Caco-2 (cell line): ENCODE measurements at regions of chr7 and their contacts with region 1.

Region 1: DNA sequence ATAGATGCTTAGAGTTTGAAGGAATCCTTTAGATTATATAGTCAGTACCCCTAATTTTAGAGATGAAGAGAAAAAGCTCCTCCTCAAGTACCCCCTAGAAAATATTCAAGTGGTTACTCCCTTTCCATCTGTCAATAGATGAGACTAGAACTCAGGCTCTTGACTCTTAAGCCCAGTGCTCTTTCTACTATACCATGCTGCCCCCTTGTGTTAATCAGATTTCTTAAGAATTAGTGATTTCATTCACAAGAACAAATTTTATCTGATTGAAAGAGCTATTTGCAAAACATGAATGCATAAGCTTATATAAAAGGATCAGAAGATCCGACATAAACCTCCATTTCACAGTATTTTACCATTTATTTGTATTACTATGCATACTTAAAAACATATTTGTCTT is 179.3 kb downstream of the TFEC start:
- DNase-seq: peak in 1 of 2 experiments; percentile 39
- H3K4me3 ChIP-seq: no peak overlapping the region
- H3K4me3 Mint-ChIP-seq: no peak overlapping the region
- H3K27ac Mint-ChIP-seq: no peak overlapping the region
- H3K4me1 ChIP-seq: no peaks in the 10 kb centered on the region
- H3K4me1 Mint-ChIP-seq: no peaks in the 10 kb centered on the region
- H3K27me3 ChIP-seq: no peaks in the 10 kb centered on the region
- H3K27me3 Mint-ChIP-seq: no peaks in the 10 kb centered on the region
- CTCF ChIP-seq: peak in 1 of 2 experiments; percentile 27

Region 2: DNA sequence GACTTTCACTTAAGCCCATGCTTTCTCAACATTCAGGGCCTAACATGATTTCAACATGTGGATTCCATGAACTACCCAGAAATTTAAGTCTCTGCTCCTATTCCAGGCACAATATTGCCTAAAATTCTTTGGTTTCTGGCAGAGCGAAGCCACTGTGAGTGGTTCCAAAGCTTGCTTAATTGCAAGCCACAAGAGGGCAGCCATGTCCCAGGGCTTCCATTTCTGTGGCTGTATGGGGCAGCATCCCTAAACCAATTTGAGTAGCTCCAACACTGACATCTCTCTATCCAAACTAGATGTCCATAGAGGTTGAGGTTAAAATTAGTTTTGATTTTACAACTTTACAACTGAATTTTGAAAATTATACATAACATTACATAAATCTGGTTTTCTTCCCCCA is 985.7 kb before region 1 on chr7:
- CTCF ChIA-PET with region 1: no interaction called
- POLR2A ChIA-PET with region 1: no interaction called
- intact Hi-C with region 1: loop called (anchors 1 kb)
- DNase-seq: peak; percentile 51 to 59
- H3K4me3 ChIP-seq: no peak overlapping the region
- H3K4me3 Mint-ChIP-seq: no peak overlapping the region
- H3K27ac Mint-ChIP-seq: no peak overlapping the region
- H3K4me1 ChIP-seq: no peaks in the 10 kb centered on the region
- H3K4me1 Mint-ChIP-seq: no peaks in the 10 kb centered on the region
- H3K27me3 ChIP-seq: no peaks in the 10 kb centered on the region
- H3K27me3 Mint-ChIP-seq: no peaks in the 10 kb centered on the region
- CTCF ChIP-seq: peak; percentile 65 to 69

Region 3: DNA sequence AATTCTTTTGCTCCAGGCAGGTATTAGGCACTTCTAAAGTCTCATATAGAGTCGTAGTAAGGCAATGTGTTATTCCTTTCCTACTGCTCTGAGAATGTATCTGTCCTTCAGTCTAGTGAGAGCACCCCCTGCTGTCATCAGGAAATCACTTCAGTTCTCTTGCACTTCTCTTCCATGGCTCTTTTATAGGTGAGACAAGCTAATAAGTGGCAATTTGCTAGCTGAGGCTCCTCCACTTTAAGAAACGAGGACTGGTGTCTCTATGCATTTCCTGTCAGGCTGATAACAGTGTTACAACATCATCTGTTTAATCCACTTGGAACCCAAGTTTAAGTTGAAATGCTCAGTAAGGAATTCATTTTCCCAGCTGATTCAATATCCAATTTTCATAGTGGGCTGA is 171.3 kb before region 1 on chr7:
- CTCF ChIA-PET with region 1: interaction called, 10 read pairs
- POLR2A ChIA-PET with region 1: no interaction called
- intact Hi-C with region 1: loop called (anchors 1 kb)
- DNase-seq: peak in 1 of 2 experiments; percentile 55
- H3K4me3 ChIP-seq: no peak overlapping the region
- H3K4me3 Mint-ChIP-seq: no peak overlapping the region
- H3K27ac Mint-ChIP-seq: no peak overlapping the region
- H3K4me1 ChIP-seq: no peaks in the 10 kb centered on the region
- H3K4me1 Mint-ChIP-seq: peaks cover 7% of the 10 kb centered on the region
- H3K27me3 ChIP-seq: no peaks in the 10 kb centered on the region; the same call in 1 of the 2 replicates
- H3K27me3 Mint-ChIP-seq: no peaks in the 10 kb centered on the region
- CTCF ChIP-seq: peak; percentile 58 to 59

Region 4: DNA sequence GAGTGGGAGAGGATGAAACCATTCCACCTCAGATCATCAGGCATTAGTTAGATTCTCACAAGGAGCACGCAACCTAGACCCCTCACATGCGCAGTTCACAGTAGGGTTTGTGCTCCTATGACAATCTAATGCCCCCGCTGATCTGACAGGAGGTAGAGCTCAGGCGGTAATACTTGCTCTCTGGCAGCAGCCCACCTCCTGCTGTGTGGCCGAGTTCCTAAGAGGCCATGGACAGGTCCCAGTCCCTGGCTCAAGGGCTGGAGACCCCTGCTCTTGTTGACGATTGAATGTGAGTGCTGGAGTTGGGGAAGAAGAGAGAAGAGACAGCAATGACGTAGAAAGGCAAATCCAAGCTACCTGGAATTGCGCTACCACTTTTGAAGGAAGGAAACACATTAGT is 87.9 kb before region 1 on chr7:
- CTCF ChIA-PET with region 1: no interaction called
- POLR2A ChIA-PET with region 1: no interaction called
- intact Hi-C with region 1: loop called (anchors 5 kb)
- DNase-seq: no peak
- H3K4me3 ChIP-seq: no peak overlapping the region
- H3K4me3 Mint-ChIP-seq: no peak overlapping the region
- H3K27ac Mint-ChIP-seq: no peak overlapping the region
- H3K4me1 ChIP-seq: no peaks in the 10 kb centered on the region
- H3K4me1 Mint-ChIP-seq: no peaks in the 10 kb centered on the region
- H3K27me3 ChIP-seq: no peaks in the 10 kb centered on the region
- H3K27me3 Mint-ChIP-seq: peaks cover 2% of the 10 kb centered on the region
- CTCF ChIP-seq: no peak

Region 5: DNA sequence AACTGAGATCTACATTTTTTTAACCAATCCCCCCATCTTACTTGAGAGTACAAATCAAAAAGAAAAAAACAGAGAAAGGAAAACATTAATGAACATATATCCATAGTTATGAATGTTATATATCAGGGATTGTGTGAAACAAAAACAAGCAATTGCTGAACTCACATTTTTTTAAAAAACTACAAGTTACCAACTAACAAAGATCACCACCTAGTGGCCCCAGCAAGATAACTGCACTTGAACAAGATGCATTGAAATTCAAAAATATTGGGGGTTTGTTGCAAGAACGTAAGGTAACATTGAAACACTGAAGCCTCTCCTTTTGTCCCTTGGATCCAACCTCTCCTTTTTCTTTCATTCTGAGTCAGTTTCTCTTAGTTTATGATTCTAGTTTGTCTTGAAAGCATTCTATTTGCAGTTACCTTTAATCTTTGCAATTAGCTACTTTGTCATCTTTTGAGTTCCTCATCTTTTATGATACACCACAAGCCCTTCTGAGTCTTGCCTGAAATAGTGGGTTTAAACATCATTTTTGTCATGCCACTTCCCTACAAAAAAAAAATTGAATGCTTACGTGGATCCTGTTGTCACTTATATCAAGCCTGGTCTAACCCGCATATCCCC is 271.8 kb after region 1 on chr7:
- CTCF ChIA-PET with region 1: no interaction called
- POLR2A ChIA-PET with region 1: no interaction called
- intact Hi-C with region 1: loop called (anchors 1 kb)
- DNase-seq: peak in 1 of 2 experiments; percentile 44
- H3K4me3 ChIP-seq: no peak overlapping the region
- H3K4me3 Mint-ChIP-seq: no peak overlapping the region
- H3K27ac Mint-ChIP-seq: no peak overlapping the region
- H3K4me1 ChIP-seq: 0 out of 2 replicates have a peak, but pooled peaks cover 7% of the 10 kb centered on the region
- H3K4me1 Mint-ChIP-seq: no peaks in the 10 kb centered on the region
- H3K27me3 ChIP-seq: no peaks in the 10 kb centered on the region
- H3K27me3 Mint-ChIP-seq: no peaks in the 10 kb centered on the region
- CTCF ChIP-seq: peak; percentile 67 to 84